PC-3 (cell line): ENCODE measurements at regions of chr1 and their contacts with region 1.

Region 1: GRCh38 chr1:226798427-226799411 is 59.6 kb upstream of the ITPKB start:
- DNase-seq: no peak
- ATAC-seq: no peak
- H3K4me3 ChIP-seq: no peak overlapping the region
- H3K27ac ChIP-seq: no peak overlapping the region
- H3K4me1 ChIP-seq: no peaks in the 10 kb centered on the region
- H3K27me3 ChIP-seq: no peaks in the 10 kb centered on the region
- CTCF ChIP-seq: no peak

Region 2: GRCh38 chr1:226233293-226233692 is 565.4 kb before region 1 on chr1:
- CTCF ChIA-PET with region 1: no interaction called
- POLR2A ChIA-PET with region 1: no interaction called
- intact Hi-C with region 1: no loop called
- DNase-seq: no peak
- ATAC-seq: no peak
- H3K4me3 ChIP-seq: no peak overlapping the region
- H3K27ac ChIP-seq: no peak overlapping the region
- H3K4me1 ChIP-seq: no peaks in the 10 kb centered on the region
- H3K27me3 ChIP-seq: no peaks in the 10 kb centered on the region
- CTCF ChIP-seq: no peak

Region 3: DNA sequence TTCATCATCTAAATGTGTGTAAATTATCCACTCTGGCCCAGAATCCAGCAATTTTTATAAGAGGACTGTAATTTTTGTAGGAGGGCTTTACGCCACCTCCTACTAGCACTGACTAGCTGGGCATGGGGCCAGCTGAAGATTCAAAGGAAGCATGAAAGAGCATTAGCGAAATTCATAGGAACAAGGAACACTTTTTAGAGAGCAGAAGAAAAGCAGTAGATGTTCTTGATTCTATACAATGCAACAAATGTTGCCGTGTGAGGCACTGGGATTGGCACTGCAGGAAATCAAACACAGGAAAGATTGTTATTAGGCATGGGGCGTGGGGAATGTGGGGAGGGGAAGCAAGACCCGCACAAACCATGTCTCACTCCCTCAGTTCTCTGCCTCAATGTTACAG is 332.4 kb before region 1 on chr1:
- CTCF ChIA-PET with region 1: no interaction called
- POLR2A ChIA-PET with region 1: no interaction called
- intact Hi-C with region 1: no loop called
- DNase-seq: no peak
- ATAC-seq: no peak
- H3K4me3 ChIP-seq: no peak overlapping the region
- H3K27ac ChIP-seq: no peak overlapping the region
- H3K4me1 ChIP-seq: no peaks in the 10 kb centered on the region
- H3K27me3 ChIP-seq: no peaks in the 10 kb centered on the region
- CTCF ChIP-seq: no peak

Region 4: GRCh38 chr1:226748306-226748705 is 50.4 kb before region 1 on chr1:
- CTCF ChIA-PET with region 1: no interaction called
- POLR2A ChIA-PET with region 1: interaction called, 15 read pairs
- intact Hi-C with region 1: no loop called
- DNase-seq: no peak
- ATAC-seq: no peak
- H3K4me3 ChIP-seq: no peak overlapping the region
- H3K27ac ChIP-seq: no peak overlapping the region
- H3K4me1 ChIP-seq: no peaks in the 10 kb centered on the region
- H3K27me3 ChIP-seq: no peaks in the 10 kb centered on the region
- CTCF ChIP-seq: no peak